OCI-LY7 (cell line): ENCODE measurements at regions of chr1 and their contacts with region 1.

Region 1: DNA sequence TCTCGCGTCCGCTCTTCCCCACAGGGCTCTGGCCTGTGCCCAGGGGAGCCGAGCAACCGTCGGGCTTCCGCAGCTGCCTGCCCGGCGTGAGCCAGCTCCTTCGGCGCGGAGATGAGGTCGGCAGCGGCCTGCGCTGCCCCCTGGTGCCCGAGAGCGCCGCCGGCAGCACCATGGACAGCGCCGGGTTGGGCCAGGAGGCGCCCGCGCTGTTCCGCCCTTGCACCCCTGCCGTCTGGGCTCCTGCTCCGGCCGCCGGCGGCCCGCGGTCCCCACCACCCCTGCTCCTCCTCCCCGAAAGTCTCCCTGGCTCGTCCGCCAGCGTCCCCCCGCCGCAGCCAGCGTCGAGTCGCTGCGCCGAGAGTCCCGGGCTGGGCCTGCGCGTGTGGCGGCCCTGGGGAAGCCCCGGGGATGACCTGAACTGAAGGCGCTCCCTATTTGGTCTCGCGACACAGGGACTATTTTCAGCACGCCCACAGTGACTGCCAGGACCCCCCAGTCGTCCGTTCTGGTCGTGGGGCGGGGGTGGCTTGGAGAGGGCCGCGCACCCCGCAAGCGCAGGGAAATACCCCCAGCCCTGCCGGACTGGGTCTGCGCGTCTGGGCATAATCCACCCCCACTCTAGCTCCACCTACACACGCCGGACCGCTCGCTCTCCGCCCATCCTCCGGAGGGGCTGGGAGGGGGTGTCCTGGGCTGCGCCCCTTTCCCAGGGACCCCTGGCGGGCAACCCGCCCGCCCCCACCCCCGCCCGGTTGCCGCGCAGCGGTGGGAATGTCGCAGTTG is 1.3 kb downstream of the HES3 start:
- DNase-seq: peak; percentile 74
- H3K4me3 ChIP-seq: no peak overlapping the region
- H3K27ac ChIP-seq: no peak overlapping the region
- H3K4me1 ChIP-seq: no peaks in the 10 kb centered on the region
- CTCF ChIP-seq: peak; percentile 71

Region 2: DNA sequence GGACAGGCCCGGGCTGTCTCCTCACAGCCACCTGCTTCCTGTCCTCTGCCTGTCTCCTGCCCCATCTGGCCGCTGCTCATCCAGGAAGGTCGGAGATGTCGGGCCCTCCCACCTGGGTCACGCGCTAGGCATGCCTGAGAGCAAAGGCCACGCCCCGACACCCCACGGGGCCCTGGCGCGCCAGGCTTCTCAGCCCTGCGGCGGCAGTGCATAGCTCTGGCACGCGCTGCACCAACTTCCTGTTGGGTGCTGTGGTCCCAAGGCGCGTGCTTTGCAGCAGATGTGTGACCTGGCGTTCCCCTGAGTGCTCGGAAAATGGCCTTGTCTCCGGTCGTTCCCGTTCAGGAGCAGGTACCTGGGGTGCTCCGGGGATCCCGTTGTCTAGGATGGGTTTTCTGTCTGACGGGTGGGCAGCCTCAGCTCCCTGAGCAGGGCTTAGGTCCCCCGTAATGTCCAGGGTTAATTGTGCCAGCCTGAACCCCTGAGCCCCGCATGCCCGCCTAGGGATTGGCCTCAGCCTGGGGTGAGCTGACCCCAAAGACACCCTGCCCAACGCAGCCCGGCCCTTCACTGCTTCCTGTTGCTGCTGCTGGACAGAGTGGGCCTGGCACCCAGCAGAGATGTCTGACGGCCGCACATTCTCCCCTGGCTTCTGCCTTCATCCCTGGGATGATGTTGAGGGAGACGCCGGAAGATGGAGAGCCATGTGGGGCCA is 219.0 kb before region 1 on chr1:
- CTCF ChIA-PET with region 1: no interaction called
- POLR2A ChIA-PET with region 1: no interaction called
- intact Hi-C with region 1: no loop called
- DNase-seq: peak; percentile 93
- H3K4me3 ChIP-seq: peak overlapping the region; percentile 73
- H3K27ac ChIP-seq: peak overlapping the region; percentile 53
- H3K4me1 ChIP-seq: peaks cover 49% of the 10 kb centered on the region
- CTCF ChIP-seq: no peak

Region 3: DNA sequence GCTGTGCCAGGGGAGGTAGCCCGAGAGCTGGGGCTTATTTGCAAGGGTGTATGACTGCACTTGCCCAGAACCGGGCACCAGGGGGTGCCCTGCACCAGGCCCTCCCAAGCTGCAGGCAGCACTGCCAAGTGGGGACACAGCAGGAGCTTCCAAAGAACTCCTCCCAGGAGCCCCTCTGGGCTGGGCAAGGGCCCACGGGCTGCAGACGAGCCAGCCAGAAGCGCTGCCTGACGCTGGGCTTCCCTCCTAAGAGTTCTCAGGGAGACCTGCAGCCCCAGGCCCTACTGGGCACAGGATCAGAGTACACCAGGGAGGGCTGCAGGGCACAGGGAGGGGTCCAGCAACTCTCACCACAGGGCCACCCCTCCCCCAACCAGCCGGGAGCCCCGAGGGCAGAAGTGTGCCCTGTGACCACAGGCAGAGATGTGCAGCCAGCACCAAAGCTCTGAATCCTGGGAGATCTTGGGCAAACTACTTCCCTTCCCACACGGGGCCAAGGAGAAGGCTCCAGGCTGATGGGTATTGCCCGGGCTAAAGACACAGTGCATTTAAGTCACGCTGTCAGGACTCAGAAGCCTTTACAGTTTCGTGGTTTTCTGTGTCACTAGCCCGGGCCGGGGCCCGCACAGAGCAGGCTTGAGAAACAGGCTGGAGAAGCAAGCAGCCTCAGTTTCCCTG is 136.2 kb before region 1 on chr1:
- CTCF ChIA-PET with region 1: no interaction called
- POLR2A ChIA-PET with region 1: no interaction called
- intact Hi-C with region 1: loop called (anchors 10 kb)
- DNase-seq: peak; percentile 43
- H3K4me3 ChIP-seq: no peak overlapping the region
- H3K27ac ChIP-seq: no peak overlapping the region
- H3K4me1 ChIP-seq: no peaks in the 10 kb centered on the region
- CTCF ChIP-seq: peak; percentile 73

Region 4: GRCh38 chr1:6343506-6344405 is 98.5 kb after region 1 on chr1:
- CTCF ChIA-PET with region 1: interaction called, 3 read pairs
- POLR2A ChIA-PET with region 1: no interaction called
- intact Hi-C with region 1: loop called (anchors 1 kb)
- DNase-seq: peak; percentile 58
- H3K4me3 ChIP-seq: no peak overlapping the region
- H3K27ac ChIP-seq: no peak overlapping the region
- H3K4me1 ChIP-seq: no peaks in the 10 kb centered on the region
- CTCF ChIP-seq: peak; percentile 84

Region 5: DNA sequence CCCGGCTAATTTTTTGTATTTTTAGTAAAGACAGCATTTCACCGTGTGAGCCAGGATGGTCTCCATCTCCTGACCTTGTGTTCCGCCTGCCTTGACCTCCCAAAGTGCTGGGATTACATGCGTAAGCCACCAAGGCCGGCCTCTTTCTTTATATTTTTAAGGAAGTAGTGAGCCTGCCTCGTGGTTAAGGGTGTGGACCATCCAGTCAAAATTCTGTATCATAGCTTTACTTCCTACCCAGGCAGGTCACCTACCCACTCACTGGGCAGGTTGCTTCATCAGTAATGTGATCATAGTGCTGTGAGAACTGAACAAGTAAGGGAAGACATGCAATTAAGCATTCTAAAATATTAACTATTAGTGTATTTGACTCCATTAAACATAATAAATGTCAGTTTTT is 156.4 kb after region 1 on chr1:
- CTCF ChIA-PET with region 1: interaction called, 3 read pairs
- POLR2A ChIA-PET with region 1: interaction called, 4 read pairs
- intact Hi-C with region 1: loop called (anchors 2 kb)
- DNase-seq: no peak
- H3K4me3 ChIP-seq: no peak overlapping the region
- H3K27ac ChIP-seq: no peak overlapping the region
- H3K4me1 ChIP-seq: no peaks in the 10 kb centered on the region
- CTCF ChIP-seq: no peak

Region 6: DNA sequence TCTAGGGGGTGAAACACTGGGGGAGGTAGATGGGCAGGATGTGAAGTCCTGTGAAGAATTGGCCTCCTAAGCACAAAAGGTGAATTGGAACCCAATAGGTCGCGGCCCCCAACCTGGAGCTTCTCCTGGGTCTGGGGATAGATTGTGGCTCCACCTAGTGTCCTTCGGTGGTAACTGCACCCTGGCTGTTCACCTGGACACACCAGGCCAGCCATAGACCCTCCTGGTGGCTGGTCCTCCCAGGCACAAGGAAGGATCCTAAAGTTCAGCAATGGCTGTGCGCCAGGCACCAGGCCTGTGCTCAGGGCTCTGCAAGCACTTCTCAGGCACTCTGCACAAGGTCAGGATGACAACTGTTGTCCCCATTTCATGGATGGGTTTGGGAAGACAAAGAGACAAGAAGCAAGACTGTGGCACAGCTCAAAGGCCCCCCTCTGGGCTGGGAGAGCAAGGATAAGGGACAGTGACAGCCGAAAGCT is 192.8 kb after region 1 on chr1:
- CTCF ChIA-PET with region 1: interaction called, 4 read pairs
- POLR2A ChIA-PET with region 1: no interaction called
- intact Hi-C with region 1: loop called (anchors 10 kb)
- DNase-seq: peak; percentile 68
- H3K4me3 ChIP-seq: no peak overlapping the region
- H3K27ac ChIP-seq: no peak overlapping the region
- H3K4me1 ChIP-seq: no peaks in the 10 kb centered on the region
- CTCF ChIP-seq: peak; percentile 85